ENCODE measurements at regions of chr1 and their contacts with region 1.

Region 1: DNA sequence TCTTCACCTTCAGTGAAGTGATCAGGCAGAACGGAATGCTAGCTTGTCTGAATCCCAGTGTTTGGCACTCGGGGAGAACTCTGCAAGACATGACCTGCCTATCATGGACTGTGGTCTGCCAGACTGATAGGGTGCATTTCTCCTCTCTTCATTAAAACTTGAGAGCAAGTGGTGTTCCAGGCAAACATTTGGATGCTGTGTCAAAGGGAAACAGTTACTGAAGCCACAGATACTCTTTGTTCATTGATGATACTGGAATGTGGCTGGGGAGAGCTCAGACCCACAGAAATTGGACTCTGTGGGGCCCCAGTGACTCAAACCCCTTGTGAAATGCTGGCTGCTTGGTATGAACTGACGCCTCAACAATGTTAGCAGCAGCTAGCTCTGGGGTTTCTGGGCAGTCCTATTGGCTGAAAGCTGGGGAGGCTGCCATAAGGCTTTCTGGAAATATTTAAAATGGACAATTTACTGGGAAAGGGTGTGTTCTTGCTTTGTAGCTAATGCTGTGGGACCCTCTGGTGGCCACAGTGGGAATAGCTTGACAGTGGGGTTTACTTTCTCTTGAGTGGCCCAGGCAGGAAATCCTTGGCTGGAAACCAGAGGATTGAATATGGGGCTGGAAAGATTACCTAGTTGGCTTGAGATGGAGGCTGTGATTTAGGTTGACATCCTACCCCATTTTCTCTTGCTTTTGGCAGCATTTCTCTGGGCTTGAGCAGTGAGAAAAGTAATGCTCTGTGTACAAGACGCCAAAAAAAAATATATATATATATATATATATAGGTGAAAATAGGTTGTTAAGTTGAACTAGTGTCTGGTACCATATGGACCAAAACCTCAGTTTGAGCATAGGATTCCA is 8.0 kb upstream of the S100A10 start:
- DNase-seq: peak; percentile 62
- CTCF ChIP-seq: peak; percentile 87

Region 2: GRCh38 chr1:151702936-151703335 is 298.7 kb before region 1 on chr1:
- CTCF ChIA-PET with region 1: no interaction called
- POLR2A ChIA-PET with region 1: no interaction called
- DNase-seq: no peak
- CTCF ChIP-seq: no peak

Region 3: GRCh38 chr1:151888972-151889570 is 112.5 kb before region 1 on chr1:
- CTCF ChIA-PET with region 1: interaction called, 37 read pairs
- POLR2A ChIA-PET with region 1: no interaction called
- DNase-seq: no peak
- CTCF ChIP-seq: peak; percentile 51

Region 4: GRCh38 chr1:151934048-151934493 is 67.5 kb before region 1 on chr1:
- CTCF ChIA-PET with region 1: interaction called, 159 read pairs
- POLR2A ChIA-PET with region 1: no interaction called
- DNase-seq: peak; percentile 42
- CTCF ChIP-seq: peak; percentile 61

Region 5: GRCh38 chr1:151976858-151977257 is 24.8 kb before region 1 on chr1:
- CTCF ChIA-PET with region 1: interaction called, 134 read pairs
- POLR2A ChIA-PET with region 1: no interaction called
- DNase-seq: no peak
- CTCF ChIP-seq: no peak

Region 6: DNA sequence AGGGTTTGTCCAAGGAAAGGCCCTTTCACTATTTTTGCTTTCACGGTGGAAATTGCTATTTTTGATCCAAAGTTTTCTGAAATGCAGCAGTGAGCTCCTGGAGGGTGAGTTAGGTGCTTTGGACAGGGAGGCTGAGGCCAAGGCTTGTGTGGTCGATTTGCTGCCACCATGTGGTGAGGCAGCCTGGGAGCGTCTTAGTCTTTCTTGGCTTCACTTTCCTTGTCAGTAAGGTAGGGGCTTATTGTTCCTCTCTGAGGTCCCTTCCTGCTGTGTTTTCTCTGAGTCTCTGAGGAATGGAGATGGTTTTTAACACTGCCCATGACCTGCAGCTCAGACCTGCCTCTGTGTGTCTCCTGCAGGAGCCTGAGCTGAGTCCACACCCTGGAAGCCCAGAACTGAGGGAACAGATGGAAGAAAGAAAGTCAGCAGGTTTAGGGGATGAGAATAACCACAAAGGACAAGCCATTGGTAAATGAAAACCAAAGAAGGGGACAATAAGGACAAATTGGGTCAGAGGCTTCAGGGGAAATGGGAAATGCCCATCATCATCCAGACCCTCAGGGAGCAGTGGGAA is 12.1 kb after region 1 on chr1:
- CTCF ChIA-PET with region 1: interaction called, 57 read pairs
- POLR2A ChIA-PET with region 1: no interaction called
- DNase-seq: peak; percentile 50
- CTCF ChIP-seq: peak; percentile 77